Posterior cingulate gyrus (tissue), 11 donors: ENCODE measurements at regions of chr2 and their contacts with region 1.

Region 1: DNA sequence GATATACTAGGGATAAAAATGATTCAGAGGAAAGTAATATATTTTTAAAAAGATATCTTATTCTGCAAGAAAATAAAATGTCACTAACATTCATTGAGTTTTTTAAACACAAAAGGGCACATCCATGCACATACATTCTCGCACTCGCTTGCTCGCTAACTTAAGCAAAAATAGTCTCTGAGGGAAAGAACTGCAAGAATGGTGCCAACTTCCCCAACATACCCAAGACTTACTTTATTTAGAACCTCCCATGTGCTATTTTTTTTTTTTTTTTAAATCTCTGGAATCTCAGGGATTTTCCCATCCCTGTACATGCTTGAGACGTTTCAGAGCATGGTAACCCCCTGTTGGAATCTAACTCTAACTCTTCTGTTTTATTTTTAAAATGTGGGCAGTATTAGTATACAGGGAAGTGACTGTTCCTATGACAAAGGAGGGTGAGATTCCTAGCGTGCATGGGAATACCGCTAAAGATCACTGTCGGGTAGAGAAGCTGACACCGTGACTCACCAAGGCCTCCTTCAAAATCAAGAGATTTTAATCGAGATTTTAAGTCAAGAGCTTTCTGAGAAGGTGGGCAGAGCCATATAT is 187.9 kb upstream of the ZEB2 start:
- DNase-seq: no peak

Region 2: DNA sequence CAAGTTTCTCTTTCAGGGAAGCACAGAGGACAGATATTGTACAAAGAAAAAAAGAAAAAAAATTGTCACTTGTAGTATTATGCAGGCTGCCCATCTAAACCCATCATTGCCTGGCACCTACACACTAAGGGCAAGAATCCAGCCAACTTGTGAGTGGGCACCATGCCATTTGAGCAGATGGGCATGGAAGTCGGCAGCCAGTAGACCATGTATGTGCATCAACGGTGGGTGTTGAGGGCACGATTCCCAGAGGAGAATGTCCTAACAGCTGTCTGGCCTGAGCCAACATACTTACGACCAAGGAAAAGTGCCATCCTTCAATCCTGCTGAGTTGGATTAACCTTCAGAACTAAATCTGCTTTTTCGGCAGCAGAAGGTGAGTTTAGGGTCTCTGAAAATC is 1514.7 kb before region 1 on chr2:
- intact Hi-C with region 1: no loop called
- DNase-seq: peak; percentile 9 to 91 (median 49)

Region 3: DNA sequence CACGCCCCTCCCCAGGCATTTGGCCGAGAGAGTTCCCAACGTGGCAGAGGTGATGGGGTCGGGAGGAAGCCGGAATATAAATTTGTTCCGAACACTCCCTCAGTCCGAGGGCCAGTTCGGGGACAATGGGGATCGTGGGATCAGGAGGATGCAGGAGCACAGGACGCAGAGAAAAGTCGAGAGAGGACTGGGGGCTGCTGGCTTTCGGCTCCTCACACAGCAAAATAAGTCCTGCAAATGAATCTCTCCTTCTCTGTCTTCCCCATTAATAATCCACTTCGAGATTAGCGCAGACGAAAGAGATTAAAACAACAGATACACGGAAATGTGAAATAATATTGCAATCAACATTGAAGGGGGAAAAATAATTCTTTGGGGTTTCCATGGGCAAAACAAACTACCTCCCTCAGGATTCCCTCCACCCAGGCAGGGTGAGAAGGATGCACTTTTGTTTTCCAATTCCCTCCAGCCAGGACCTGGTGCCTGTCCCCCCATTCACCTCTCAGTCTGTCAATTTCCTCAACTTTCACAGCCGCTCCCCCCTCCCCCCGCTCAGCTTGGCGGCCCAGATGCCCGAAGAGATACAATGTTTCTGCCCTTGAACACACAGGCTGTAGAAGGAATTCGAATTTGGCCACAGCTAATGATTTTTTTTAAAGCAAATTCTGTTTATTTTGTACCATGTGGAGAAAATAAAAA is 184.8 kb before region 1 on chr2:
- intact Hi-C with region 1: loop called (anchors 2 kb)
- DNase-seq: peak in 7 of 10 donors; percentile 49 to 91 (median 64)

Region 4: DNA sequence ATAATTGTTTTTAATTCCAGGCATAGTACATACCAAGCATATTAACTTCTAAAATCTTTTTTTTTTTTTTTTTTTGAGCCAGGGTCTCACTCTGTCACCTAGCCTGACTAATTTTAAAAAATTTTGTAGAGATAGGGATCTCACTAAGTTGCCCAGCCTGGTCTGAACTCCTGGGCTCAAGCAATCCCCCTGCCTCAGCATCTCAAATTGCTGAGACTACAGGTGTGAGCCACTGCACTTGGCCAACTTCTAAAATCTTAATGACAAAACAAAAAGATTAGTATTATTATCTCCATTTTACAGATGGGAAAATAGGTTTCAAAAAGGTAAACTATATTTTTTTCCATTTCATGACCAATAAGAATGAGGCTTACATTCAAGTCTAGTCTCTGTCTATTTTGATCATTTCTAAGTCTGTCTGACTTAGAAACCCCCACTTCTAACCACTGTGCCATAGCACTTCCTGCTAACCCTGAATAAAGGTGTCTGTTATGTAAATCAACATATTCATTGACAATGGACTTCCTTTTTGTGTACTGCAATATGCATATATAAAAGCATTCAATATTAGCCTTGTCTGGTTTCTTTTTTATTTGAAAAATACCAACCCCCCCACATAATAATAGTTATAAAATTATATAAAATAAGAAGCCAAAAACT is 159.2 kb before region 1 on chr2:
- intact Hi-C with region 1: no loop called
- DNase-seq: no peak

Region 5: GRCh38 chr2:144659731-144660275 is 48.0 kb before region 1 on chr2:
- intact Hi-C with region 1: no loop called
- DNase-seq: no peak

Region 6: GRCh38 chr2:145235312-145235711 is 527.5 kb after region 1 on chr2:
- intact Hi-C with region 1: no loop called
- DNase-seq: no peak